ENCODE measurements at regions of chr2 and their contacts with region 1.

Region 1: DNA sequence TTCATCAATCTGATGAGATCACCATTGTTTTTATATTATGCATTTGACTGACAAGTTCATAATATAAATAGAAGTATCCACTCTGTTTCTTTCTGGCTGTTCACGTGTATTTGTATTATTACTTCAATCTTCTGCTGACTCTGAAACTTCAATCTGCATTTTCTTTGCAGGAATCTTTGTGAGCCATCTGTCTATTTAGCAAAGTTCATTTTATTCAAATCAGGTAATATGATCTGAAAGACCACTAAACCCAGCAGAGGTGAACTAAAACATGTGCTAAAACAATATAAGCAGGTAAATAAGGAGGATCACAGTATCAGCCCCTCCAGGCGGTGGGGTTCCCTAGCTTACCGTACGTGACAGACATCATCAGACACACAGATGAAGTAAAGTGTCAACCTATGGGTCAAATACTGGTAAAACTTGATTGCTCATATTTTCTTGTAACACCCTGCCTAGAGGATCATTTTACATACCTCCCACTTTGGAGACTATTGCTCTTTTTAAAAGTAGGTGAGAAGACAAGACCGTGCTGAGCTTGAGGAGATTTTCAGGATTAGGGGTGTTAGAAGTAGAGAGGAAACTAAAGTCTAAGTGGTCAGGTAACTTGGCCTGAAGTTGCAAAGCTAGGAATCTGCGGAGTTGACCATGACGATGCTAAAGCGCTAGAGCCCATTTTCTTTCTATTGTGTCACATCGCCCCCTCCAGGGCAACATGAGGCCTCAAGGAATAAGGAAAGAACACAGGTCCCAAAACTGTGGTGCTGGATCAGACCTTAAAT is 9.0 kb downstream of the DTNB start:
- DNase-seq: peak; percentile 82

Region 2: DNA sequence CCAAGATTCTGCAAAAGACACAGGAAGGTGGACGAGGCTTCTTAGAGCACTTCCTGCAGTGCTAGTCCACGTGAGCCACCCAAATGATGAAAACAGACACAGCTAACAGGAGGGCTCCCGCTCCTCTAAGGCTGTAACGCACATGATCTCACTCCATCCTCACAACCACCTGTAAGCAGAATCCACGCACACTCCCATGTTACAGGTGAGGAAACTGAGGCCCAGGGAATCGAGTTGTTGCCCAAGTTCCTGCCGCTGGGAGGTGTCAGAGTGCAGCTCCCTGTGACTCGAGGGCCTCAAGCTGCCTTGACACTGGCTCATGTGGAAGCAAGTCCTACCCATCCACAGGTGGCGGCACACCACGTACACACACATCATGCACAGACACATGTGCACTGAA is 327.1 kb before region 1 on chr2:
- intact Hi-C with region 1: loop called in 1 of 2 experiments (anchors 2 kb)
- DNase-seq: no peak

Region 3: DNA sequence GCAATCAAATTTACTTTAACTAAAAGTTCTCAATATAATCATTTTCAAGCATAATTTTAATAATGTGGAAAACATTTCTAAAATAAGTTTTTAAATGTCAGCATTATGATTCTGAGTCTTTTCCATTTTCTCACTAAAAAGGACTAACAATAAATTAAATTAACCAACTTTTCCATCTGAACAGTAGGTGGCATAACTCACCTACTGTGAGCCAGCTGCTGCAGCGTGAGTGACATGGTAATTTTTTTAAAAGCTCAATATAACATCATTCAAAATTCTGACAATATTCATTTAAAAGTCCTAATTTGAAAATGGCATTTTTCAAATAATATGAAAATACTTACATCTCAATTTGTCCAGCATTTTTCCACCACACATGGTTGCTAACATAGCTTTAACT is 57.5 kb before region 1 on chr2:
- intact Hi-C with region 1: loop called (anchors 5 to 10 kb)
- DNase-seq: no peak

Region 4: DNA sequence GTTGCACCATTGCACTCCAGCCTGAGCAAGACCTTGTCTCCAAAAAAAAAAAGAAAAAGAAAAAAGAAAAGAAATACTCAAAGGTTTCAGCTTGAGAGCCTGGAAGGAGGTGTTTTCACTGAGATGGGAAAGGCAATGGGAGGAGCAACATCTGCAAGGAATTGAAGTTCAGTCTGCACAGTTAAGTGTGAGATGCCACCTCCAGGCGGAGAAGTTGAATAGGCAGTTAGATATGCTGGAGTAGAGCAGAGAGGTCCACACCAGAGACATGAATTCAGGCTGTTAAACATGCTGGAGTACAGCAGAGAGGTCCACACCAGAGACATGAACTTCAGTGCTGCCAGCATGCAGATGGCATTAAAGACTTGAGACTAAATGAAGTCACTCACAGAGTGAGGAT is 50.4 kb after region 1 on chr2:
- intact Hi-C with region 1: no loop called
- DNase-seq: no peak

Measured in posterior vena cava (tissue), 2 donors.